ENCODE measurements at regions of chr3 and their contacts with region 1.

Region 1: GRCh38 chr3:5389057-5389456 is 201.6 kb downstream of the EDEM1 start:
- DNase-seq: peak; percentile 75 to 91
- H3K4me3 ChIP-seq: peak overlapping the region; percentile 31; the same call in 1 of the 2 replicates
- H3K27ac ChIP-seq: peak overlapping the region; percentile 99
- H3K4me1 ChIP-seq: peaks cover 32% of the 10 kb centered on the region
- H3K27me3 ChIP-seq: no peaks in the 10 kb centered on the region
- CTCF ChIP-seq: no peak

Region 2: GRCh38 chr3:5304789-5305683 is 84.0 kb before region 1 on chr3:
- CTCF ChIA-PET with region 1: no interaction called
- POLR2A ChIA-PET with region 1: no interaction called
- intact Hi-C with region 1: loop called (anchors 2 kb)
- DNase-seq: peak; percentile 51 to 57
- H3K4me3 ChIP-seq: no peak overlapping the region
- H3K27ac ChIP-seq: no peak overlapping the region
- H3K4me1 ChIP-seq: no peaks in the 10 kb centered on the region
- H3K27me3 ChIP-seq: no peaks in the 10 kb centered on the region
- CTCF ChIP-seq: peak; percentile 76

Region 3: DNA sequence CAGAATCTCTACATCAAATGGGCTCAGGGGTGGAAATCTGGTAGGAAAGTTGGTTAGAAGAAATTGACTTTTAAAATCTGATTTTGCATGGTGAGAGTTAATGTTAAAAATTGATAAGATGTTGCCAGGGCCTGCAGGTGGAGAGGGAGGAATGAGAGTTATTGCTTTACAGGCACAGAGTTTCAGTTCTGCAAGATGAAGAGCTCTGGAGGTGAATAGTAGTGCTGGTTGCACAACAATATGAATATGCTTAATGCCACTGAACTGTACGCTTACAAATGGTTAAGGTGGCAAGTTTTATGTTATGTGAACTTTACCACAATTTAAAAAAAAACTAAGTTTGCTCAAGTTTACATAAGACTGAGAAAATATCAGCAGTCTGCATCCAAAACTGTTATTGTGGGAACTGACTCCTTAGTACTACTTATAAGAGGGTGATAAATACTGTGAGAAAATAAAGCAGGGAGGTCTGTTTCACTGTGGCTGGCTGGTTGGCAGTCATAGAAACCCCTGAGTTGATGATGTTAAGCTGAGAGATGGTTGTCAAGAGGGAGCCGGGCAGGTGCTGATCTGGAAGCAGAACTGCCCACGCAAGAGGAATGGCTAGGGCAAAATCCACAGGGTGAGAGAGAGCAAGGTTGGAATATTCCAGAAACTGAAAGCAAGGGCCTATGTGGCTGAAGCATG is 56.6 kb before region 1 on chr3:
- CTCF ChIA-PET with region 1: no interaction called
- POLR2A ChIA-PET with region 1: no interaction called
- intact Hi-C with region 1: no loop called
- DNase-seq: no peak
- H3K4me3 ChIP-seq: no peak overlapping the region
- H3K27ac ChIP-seq: no peak overlapping the region
- H3K4me1 ChIP-seq: 0 out of 2 replicates have a peak, but pooled peaks cover 8% of the 10 kb centered on the region
- H3K27me3 ChIP-seq: no peaks in the 10 kb centered on the region
- CTCF ChIP-seq: no peak

Region 4: DNA sequence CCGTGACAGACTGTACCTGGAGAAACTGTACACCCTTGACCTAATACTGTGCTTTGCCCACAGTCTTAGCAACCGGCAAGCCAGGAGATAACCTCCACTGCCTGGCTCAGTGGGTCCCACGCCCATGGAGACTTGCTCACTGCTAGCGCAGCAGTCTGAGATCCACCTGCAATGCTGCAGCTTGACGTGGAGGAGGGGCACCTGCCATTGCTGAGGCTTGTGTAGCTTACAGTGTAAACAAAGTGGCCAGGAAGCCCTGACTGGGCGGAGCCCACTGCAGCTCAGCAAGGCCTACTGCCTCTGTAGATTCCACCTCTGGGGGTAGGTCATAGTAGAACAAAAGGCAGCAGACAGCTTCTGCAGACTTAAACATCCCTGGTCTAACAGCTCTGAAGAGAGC is 12.3 kb before region 1 on chr3:
- CTCF ChIA-PET with region 1: no interaction called
- POLR2A ChIA-PET with region 1: no interaction called
- intact Hi-C with region 1: loop called (anchors 1 kb)
- DNase-seq: peak; percentile 70 to 84
- H3K4me3 ChIP-seq: no peak overlapping the region
- H3K27ac ChIP-seq: no peak overlapping the region
- H3K4me1 ChIP-seq: 0 out of 2 replicates have a peak, but pooled peaks cover 3% of the 10 kb centered on the region
- H3K27me3 ChIP-seq: no peaks in the 10 kb centered on the region
- CTCF ChIP-seq: no peak

Region 5: DNA sequence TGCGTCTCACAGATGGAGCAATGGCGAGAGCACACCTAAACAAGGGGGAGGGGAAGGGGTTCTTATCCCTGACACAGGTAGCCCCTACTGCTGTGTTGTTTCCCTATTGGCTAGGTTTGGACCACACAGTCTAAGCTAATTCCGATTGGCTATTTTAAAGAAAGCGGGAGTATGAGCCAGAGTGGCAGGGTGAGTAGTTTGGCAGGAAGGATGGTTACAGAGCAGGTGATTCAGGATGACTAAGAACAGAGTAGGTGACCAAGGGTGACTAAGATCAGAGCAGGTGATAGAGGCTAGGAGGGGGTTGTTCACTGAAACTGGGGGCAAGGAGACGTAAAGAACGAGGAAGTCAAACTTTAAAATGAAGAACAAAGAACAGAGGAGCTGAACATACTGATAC is 310.3 kb after region 1 on chr3:
- CTCF ChIA-PET with region 1: no interaction called
- POLR2A ChIA-PET with region 1: no interaction called
- intact Hi-C with region 1: loop called (anchors 1 kb)
- DNase-seq: peak; percentile 56 to 85
- H3K4me3 ChIP-seq: peak overlapping the region; percentile 57
- H3K27ac ChIP-seq: peak overlapping the region; percentile 91
- H3K4me1 ChIP-seq: peaks cover 46% of the 10 kb centered on the region
- H3K27me3 ChIP-seq: no peaks in the 10 kb centered on the region
- CTCF ChIP-seq: no peak

Region 6: GRCh38 chr3:5874931-5875341 is 485.9 kb after region 1 on chr3:
- CTCF ChIA-PET with region 1: no interaction called
- POLR2A ChIA-PET with region 1: no interaction called
- intact Hi-C with region 1: no loop called
- DNase-seq: no peak
- H3K4me3 ChIP-seq: no peak overlapping the region
- H3K27ac ChIP-seq: no peak overlapping the region
- H3K4me1 ChIP-seq: no peaks in the 10 kb centered on the region
- H3K27me3 ChIP-seq: no peaks in the 10 kb centered on the region
- CTCF ChIP-seq: no peak

Region 7: DNA sequence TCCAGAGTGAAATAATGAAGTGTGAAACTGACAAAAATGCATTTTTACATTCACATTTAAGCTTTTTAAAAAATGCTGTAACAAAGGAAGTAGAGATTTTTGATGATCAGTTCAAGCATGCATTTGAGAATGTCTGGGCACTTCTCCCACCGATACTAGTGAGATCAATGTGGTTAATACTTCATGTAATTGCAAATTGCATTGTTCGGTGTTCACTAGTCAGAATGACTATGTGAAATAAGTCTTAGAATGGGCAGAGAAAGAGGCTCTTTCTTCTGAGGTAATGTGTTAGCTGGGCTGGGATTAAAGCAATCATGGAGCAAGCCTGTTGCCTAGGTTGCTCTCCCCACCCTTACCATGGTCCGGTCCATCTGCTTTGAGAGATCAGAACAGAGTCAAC is 884.8 kb after region 1 on chr3:
- CTCF ChIA-PET with region 1: no interaction called
- POLR2A ChIA-PET with region 1: no interaction called
- intact Hi-C with region 1: loop called (anchors 5 kb)
- DNase-seq: no peak
- H3K4me3 ChIP-seq: no peak overlapping the region
- H3K27ac ChIP-seq: no peak overlapping the region
- H3K4me1 ChIP-seq: no peaks in the 10 kb centered on the region
- H3K27me3 ChIP-seq: no peaks in the 10 kb centered on the region
- CTCF ChIP-seq: no peak

Measured in PC-9 (cell line).